GM12878 (cell line): ENCODE measurements at regions of chr3 and their contacts with region 1.

Region 1: DNA sequence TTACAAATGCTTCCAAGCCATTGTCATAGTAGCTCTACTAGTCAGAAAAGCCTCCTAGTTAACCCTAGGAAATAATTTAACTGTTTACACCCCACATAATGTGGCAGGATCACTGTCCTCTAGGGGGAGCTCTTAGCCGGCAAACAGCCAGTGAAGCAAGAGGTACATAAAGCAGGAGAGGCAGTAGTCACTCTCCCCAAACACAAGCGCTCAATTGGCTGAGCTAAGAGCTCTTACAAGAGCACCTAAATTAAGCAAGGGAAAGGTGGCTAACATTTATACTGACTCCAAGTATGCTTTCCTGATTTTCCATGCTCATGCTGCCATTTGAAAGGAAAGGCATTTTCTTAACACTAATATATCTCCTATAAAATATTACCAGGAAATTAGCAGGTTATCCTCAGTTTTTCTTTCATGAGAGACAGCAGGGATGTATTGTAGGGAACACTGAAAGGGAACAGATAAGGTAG is 37.6 kb downstream of the NCEH1 start:
- DNase-seq: no peak
- ATAC-seq: peak; percentile 97
- H3K4me3 ChIP-seq: no peak overlapping the region
- H3K27ac ChIP-seq: no peak overlapping the region
- H3K4me1 ChIP-seq: no peaks in the 10 kb centered on the region
- H3K27me3 ChIP-seq: no peaks in the 10 kb centered on the region
- CTCF ChIP-seq: peak; percentile 64 to 76 (median 67)
- EP300 ChIP-seq: no peak
- POLR2A ChIP-seq: no peak
- RAD21 ChIP-seq: peak; percentile 65

Region 2: GRCh38 chr3:172580680-172581401 is 92.4 kb before region 1 on chr3:
- CTCF ChIA-PET with region 1: no interaction called
- POLR2A ChIA-PET with region 1: no interaction called
- RAD21 ChIA-PET with region 1: no interaction called
- SMC1A ChIA-PET with region 1: no interaction called
- in situ Hi-C with region 1: no loop called
- intact Hi-C with region 1: no loop called
- DNase-seq: no peak
- ATAC-seq: peak; percentile 88
- H3K4me3 ChIP-seq: no peak overlapping the region
- H3K27ac ChIP-seq: peak overlapping the region; percentile 3; the same call in 1 of the 2 replicates
- H3K4me1 ChIP-seq: peaks cover 27% of the 10 kb centered on the region
- H3K27me3 ChIP-seq: no peaks in the 10 kb centered on the region
- CTCF ChIP-seq: no peak
- EP300 ChIP-seq: peak in 1 of 2 experiments; percentile 26; a peak in 1 of 4 replicates
- POLR2A ChIP-seq: no peak
- RAD21 ChIP-seq: no peak

Region 3: GRCh38 chr3:172607305-172608121 is 65.7 kb before region 1 on chr3:
- CTCF ChIA-PET with region 1: interaction called, 11 read pairs
- POLR2A ChIA-PET with region 1: no interaction called
- RAD21 ChIA-PET with region 1: no interaction called
- SMC1A ChIA-PET with region 1: interaction called, 5 read pairs
- in situ Hi-C with region 1: no loop called
- intact Hi-C with region 1: no loop called
- DNase-seq: no peak
- ATAC-seq: peak; percentile 76
- H3K4me3 ChIP-seq: no peak overlapping the region
- H3K27ac ChIP-seq: no peak overlapping the region; the same call in 1 of the 2 replicates
- H3K4me1 ChIP-seq: no peaks in the 10 kb centered on the region
- H3K27me3 ChIP-seq: no peaks in the 10 kb centered on the region
- CTCF ChIP-seq: no peak
- EP300 ChIP-seq: no peak
- POLR2A ChIP-seq: no peak
- RAD21 ChIP-seq: no peak

Region 4: GRCh38 chr3:172685346-172686214 is 12.3 kb after region 1 on chr3:
- CTCF ChIA-PET with region 1: interaction called, 30 read pairs
- POLR2A ChIA-PET with region 1: no interaction called
- RAD21 ChIA-PET with region 1: interaction called, 7 read pairs
- SMC1A ChIA-PET with region 1: interaction called, 3 read pairs
- in situ Hi-C with region 1: no loop called
- intact Hi-C with region 1: no loop called
- DNase-seq: no peak
- ATAC-seq: no peak
- H3K4me3 ChIP-seq: no peak overlapping the region
- H3K27ac ChIP-seq: no peak overlapping the region
- H3K4me1 ChIP-seq: no peaks in the 10 kb centered on the region
- H3K27me3 ChIP-seq: no peaks in the 10 kb centered on the region
- CTCF ChIP-seq: no peak
- EP300 ChIP-seq: no peak
- POLR2A ChIP-seq: no peak
- RAD21 ChIP-seq: no peak

Region 5: GRCh38 chr3:172701751-172702150 is 28.5 kb after region 1 on chr3:
- CTCF ChIA-PET with region 1: interaction called, 14 read pairs
- POLR2A ChIA-PET with region 1: interaction called, 3 read pairs
- RAD21 ChIA-PET with region 1: interaction called, 5 read pairs
- SMC1A ChIA-PET with region 1: interaction called, 5 read pairs
- in situ Hi-C with region 1: no loop called
- intact Hi-C with region 1: no loop called
- DNase-seq: no peak
- ATAC-seq: no peak; the same call in 2 of the 3 replicates
- H3K4me3 ChIP-seq: no peak overlapping the region
- H3K27ac ChIP-seq: no peak overlapping the region
- H3K4me1 ChIP-seq: no peaks in the 10 kb centered on the region
- H3K27me3 ChIP-seq: no peaks in the 10 kb centered on the region
- CTCF ChIP-seq: no peak
- EP300 ChIP-seq: no peak
- POLR2A ChIP-seq: no peak
- RAD21 ChIP-seq: no peak

Region 6: GRCh38 chr3:172750368-172751174 is 77.3 kb after region 1 on chr3 and contains the start of gene ECT2:
- CTCF ChIA-PET with region 1: interaction called, 32 read pairs
- POLR2A ChIA-PET with region 1: interaction called, 3 read pairs
- RAD21 ChIA-PET with region 1: interaction called, 9 read pairs
- SMC1A ChIA-PET with region 1: interaction called, 11 read pairs
- in situ Hi-C with region 1: no loop called
- intact Hi-C with region 1: loop called (anchors 2 kb)
- DNase-seq: peak; percentile 96
- ATAC-seq: peak; percentile 98
- H3K4me3 ChIP-seq: peak within 1 kb of the TSS; percentile 93
- H3K27ac ChIP-seq: peak within 1 kb of the TSS; percentile 92
- H3K4me1 ChIP-seq: no peaks in the 10 kb centered on the region
- H3K27me3 ChIP-seq: no peaks in the 10 kb centered on the region
- CTCF ChIP-seq: peak; percentile 65 to 85 (median 76); a peak in 5 of 6 replicates
- EP300 ChIP-seq: peak in 1 of 2 experiments; percentile 79; a peak in 2 of 4 replicates
- POLR2A ChIP-seq: peak; percentile 72
- RAD21 ChIP-seq: 0 out of 2 replicates have a peak, but pooled peaks have one; percentile 17
- polyA plus RNA-seq, gene ECT2: 21.5 to 27.5 TPM